B cell (primary cell): ENCODE measurements at regions of chr5 and their contacts with region 1.

Region 1: GRCh38 chr5:18699681-18700080 is 1065.4 kb downstream of the TAF11L14 start:
- DNase-seq: no peak
- ATAC-seq: no peak
- H3K4me3 ChIP-seq: no peak overlapping the region
- H3K4me3 Mint-ChIP-seq: no peak overlapping the region
- H3K27ac ChIP-seq: peak overlapping the region in 1 of 2 donors; percentile 89
- H3K27ac Mint-ChIP-seq: no peak overlapping the region
- H3K4me1 ChIP-seq: peaks cover 13 to 25% of the 10 kb centered on the region in 2 donors
- H3K4me1 Mint-ChIP-seq: peaks cover 31% of the 10 kb centered on the region
- H3K27me3 ChIP-seq: no peaks in the 10 kb centered on the region
- H3K27me3 Mint-ChIP-seq: no peaks in the 10 kb centered on the region
- CTCF ChIP-seq: no peak

Region 2: DNA sequence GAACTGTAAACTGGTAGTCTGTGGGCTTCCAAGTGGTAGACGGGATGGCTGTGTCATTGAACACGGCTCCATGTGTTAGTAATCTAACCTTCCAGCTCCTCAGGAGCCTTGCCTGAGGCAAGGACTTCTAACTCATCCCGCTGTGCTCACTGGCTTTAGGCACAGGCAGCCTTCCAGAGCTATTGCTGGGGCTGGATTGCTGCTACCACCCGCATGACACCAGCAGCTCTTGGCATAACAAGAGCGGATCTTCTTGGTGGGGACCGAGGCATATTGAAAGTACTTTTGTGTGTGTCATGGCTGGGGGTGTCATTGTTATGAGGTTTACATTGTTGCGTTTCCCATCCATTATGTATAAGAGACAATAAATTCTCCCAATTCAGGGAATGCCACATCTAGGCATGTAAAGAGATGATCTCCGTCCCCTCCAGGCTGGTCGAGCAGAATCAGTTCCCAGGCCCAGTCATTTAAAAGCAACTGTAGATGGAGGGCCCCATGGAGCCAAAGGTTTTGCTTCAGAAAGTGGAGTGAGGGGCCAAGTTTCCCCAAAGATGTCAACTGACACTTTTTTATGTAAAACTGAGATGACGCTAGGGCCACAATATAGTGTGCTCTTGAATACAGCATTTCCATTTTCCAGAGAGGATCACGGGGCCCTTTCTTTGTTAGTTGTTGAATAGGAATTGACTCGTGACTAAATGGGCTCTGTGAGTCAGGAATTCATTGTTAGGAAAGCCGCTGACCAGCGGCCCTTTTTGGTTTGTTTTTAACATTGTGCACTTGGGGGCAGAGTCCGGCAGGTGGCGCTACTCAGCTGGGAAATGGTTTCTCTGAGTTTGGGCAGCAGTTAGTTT is 305.9 kb before region 1 on chr5:
- CTCF ChIA-PET with region 1: no interaction called
- POLR2A ChIA-PET with region 1: no interaction called
- intact Hi-C with region 1: loop called (anchors 1 kb)
- DNase-seq: peak; percentile 47
- ATAC-seq: peak; percentile 31
- H3K4me3 ChIP-seq: no peak overlapping the region
- H3K4me3 Mint-ChIP-seq: no peak overlapping the region
- H3K27ac ChIP-seq: no peak overlapping the region
- H3K27ac Mint-ChIP-seq: no peak overlapping the region
- H3K4me1 ChIP-seq: no peaks in the 10 kb centered on the region
- H3K4me1 Mint-ChIP-seq: no peaks in the 10 kb centered on the region
- H3K27me3 ChIP-seq: no peaks in the 10 kb centered on the region
- H3K27me3 Mint-ChIP-seq: no peaks in the 10 kb centered on the region
- CTCF ChIP-seq: peak; percentile 85

Region 3: GRCh38 chr5:18465833-18466591 is 233.7 kb before region 1 on chr5:
- CTCF ChIA-PET with region 1: interaction called, 19 read pairs
- POLR2A ChIA-PET with region 1: no interaction called
- intact Hi-C with region 1: loop called (anchors 1 kb)
- DNase-seq: peak; percentile 46
- ATAC-seq: peak; percentile 57
- H3K4me3 ChIP-seq: no peak overlapping the region
- H3K4me3 Mint-ChIP-seq: no peak overlapping the region
- H3K27ac ChIP-seq: no peak overlapping the region
- H3K27ac Mint-ChIP-seq: no peak overlapping the region
- H3K4me1 ChIP-seq: no peaks in the 10 kb centered on the region
- H3K4me1 Mint-ChIP-seq: no peaks in the 10 kb centered on the region
- H3K27me3 ChIP-seq: no peaks in the 10 kb centered on the region
- H3K27me3 Mint-ChIP-seq: no peaks in the 10 kb centered on the region
- CTCF ChIP-seq: peak; percentile 88

Region 4: DNA sequence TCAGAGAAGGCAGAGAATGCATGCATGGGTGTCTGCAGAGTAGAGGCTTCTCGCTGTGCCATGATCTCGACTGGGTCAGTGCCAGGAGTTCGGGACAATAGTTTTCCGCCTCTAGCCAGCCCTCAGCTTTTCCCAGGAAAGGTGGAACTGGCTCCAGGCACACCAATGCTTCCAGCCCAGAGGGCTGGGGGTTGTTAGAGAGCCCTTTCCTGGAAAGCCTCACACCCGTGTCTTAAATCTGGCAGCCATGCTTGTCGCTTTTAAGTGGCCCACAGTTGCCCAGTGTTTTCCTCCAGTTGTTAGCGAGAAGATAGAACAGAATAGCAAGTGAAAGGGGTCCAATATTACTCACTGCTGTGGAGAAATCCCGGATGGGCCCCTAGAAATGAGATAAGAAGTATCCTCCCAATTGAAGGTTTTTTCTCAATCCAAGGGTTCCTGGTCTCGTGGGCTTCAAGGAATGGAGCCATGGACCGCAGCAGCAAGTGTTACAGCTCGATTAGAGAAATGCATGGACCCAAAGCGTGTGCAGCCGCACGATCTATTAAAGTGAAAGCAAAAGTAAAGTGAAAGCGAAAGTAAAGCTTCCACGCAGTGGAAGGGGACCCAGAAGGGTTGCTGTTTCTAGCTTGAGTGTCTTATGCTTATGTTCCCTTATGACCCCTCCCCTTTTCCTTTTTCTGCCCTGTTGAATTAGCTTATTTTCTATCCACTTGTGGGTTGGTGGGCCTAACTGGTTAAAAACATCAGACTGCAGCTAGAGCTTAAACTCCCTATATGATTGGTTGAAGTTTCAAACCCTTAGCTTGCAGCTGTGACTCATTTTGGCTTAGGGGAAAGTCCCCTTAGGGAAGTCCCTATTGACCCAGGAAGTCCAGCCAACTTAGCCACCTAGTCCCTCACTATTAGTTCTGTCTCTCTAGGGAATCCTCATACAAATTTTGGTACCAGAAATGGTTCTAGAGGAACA is 46.2 kb after region 1 on chr5:
- CTCF ChIA-PET with region 1: interaction called, 3 read pairs
- POLR2A ChIA-PET with region 1: no interaction called
- intact Hi-C with region 1: loop called (anchors 1 kb)
- DNase-seq: peak; percentile 87
- ATAC-seq: peak; percentile 84
- H3K4me3 ChIP-seq: peak overlapping the region; percentile 52 to 100 (median 85)
- H3K4me3 Mint-ChIP-seq: peak overlapping the region; percentile 90
- H3K27ac ChIP-seq: peak overlapping the region; percentile 85 to 94
- H3K27ac Mint-ChIP-seq: peak overlapping the region; percentile 94
- H3K4me1 ChIP-seq: peaks cover 45 to 46% of the 10 kb centered on the region in 2 donors
- H3K4me1 Mint-ChIP-seq: peaks cover 58% of the 10 kb centered on the region
- H3K27me3 ChIP-seq: no peaks in the 10 kb centered on the region
- H3K27me3 Mint-ChIP-seq: no peaks in the 10 kb centered on the region
- CTCF ChIP-seq: no peak